Dorsolateral prefrontal cortex (tissue), 120 donors: ENCODE measurements at regions of chr10 and their contacts with region 1.

Region 1: DNA sequence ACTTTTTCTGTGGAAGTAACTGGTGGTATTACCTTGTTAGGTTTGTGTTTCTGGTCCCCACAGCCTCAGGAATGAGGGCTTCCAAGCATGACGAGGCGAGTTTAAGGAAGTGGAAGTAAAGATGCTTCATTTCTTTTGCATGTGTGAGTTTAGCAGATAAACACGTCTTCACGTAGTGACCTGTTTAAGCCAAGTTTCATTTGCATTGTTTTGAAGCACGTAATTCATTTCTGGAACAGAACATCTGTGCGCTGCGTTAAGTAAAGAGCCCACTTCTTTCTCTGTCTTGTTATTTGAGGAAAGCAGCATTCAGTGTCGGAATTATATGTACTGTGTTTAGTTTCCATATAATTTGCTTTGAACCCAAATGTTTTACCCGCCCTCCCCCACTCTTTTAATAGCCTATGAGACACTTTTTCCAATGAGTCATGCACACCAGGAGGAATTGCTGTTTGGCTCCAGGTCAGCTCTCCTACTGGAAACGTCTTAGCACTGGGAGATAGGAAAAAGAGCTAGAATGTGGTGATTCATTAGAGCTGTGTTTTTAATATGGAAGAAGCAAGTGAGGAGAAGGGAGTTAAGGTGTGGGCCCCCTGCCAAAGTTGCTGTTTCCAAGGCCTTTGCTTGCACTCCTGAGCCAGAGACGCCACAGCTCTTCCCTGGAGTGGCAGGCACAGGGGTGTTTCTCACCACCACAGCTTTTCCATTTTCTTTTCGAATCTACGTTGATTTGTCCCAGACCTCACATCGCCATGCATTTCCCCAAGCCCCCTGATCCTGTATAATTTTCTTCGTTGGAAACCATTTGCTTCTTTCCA is 36.8 kb downstream of the BTBD16 start:
- DNase-seq: peak in 3 of 10 donors; percentile 38 to 67 (median 60)
- H3K4me3 ChIP-seq: no peak overlapping the region
- H3K27ac ChIP-seq: peak overlapping the region in 57 of 59 donors; percentile 6 to 99 (median 75)
- H3K27me3 ChIP-seq: no peaks in the 10 kb centered on the region
- CTCF ChIP-seq: no peak

Region 2: DNA sequence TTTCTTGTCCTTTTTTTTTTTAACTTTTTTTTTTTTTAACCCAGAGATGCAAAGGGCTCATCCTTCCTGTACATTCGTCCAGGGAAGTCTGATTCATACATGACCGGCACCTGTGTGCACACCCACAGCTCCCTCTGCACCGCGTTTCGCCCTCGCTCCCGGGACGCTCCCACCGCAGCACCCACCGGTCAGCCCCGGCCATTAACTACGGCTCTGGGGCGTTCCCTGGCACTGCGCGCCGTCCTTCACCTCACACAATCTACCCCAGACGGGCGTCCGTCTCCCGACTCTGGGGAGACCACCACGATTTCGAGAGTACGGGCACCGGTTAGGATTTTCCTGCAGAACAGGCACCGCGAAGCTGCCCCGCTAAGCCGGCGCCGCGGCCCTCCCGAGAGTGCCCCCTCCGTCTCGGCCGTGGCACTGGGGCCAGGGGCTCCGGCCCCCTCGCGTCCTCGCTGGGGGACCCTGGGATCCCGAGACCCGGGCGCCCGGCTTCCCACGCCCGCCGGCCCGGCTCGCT is 380.5 kb before region 1 on chr10:
- intact Hi-C with region 1: no loop called
- DNase-seq: peak in 9 of 10 donors; percentile 28 to 67 (median 47)
- H3K4me3 ChIP-seq: peak overlapping the region; percentile 62 to 99 (median 97)
- H3K27ac ChIP-seq: peak overlapping the region; percentile 78 to 100 (median 99)
- H3K27me3 ChIP-seq: no peaks in the 10 kb centered on the region
- CTCF ChIP-seq: no peak

Region 3: GRCh38 chr10:122331615-122332446 is 24.0 kb after region 1 on chr10:
- intact Hi-C with region 1: loop called (anchors 1 to 2 kb)
- DNase-seq: peak in 5 of 10 donors; percentile 44 to 70 (median 63)
- H3K4me3 ChIP-seq: peak overlapping the region in 15 of 59 donors; percentile 1 to 41 (median 18)
- H3K27ac ChIP-seq: peak overlapping the region in 58 of 59 donors; percentile 78 to 100 (median 96)
- H3K27me3 ChIP-seq: peaks cover 0 to 5% (median 0%) of the 10 kb centered on the region in 45 donors
- CTCF ChIP-seq: no peak

Region 4: DNA sequence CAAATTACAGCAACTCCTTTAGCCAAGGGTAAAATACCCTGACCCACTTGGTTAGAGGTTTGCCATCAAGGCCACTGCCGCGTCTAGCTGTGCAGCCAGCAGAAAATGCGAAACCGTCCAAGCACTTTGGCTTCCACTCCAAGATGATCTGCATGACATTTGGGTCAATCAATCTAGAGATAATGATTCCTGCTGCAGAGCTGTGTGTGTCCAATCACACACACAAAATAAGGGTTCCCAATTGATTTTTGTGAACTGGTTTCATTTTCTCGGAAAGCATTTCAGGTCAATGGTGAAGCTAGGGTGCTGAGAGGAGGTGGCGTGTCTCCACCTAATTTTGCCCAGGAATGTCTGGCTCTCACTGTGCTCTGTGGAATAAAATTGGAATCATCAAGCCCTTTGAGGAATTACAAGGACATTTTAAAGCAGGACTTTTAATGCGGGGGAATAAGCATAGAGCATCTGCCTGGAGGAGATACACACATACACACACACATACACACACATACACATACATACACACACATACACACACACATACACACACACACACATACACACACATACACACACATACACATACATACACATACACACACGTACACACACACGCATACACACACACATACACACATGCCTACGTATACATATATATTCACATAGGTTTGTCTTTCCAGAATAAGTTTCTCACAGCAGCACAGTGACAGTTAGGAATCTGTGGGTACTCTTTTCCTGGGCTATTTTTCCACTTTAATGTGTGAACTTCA is 760.4 kb after region 1 on chr10:
- intact Hi-C with region 1: no loop called
- DNase-seq: no peak
- H3K4me3 ChIP-seq: peak overlapping the region in 7 of 59 donors; percentile 3 to 27 (median 23)
- H3K27ac ChIP-seq: peak overlapping the region in 3 of 59 donors; percentile 77 to 81 (median 80)
- H3K27me3 ChIP-seq: peaks cover 0 to 4% (median 0%) of the 10 kb centered on the region in 45 donors
- CTCF ChIP-seq: no peak